Activated CD4-positive, alpha-beta memory T cell treated with anti-CD3 and anti-CD28 coated beads, Interleukin-2, amount 10 ng/mL, durations not matched to agents 7 days and 5 days (primary cell): ENCODE measurements at regions of chr3 and their contacts with region 1.

Region 1: GRCh38 chr3:64030741-64031140 is 7.4 kb upstream of the PSMD6 start:
- DNase-seq: peak; percentile 71
- H3K4me3 Mint-ChIP-seq: peak overlapping the region; percentile 63
- H3K27ac Mint-ChIP-seq: peak overlapping the region; percentile 41
- H3K4me1 Mint-ChIP-seq: peaks cover 8% of the 10 kb centered on the region
- H3K27me3 Mint-ChIP-seq: peaks cover 32% of the 10 kb centered on the region

Region 2: GRCh38 chr3:64484289-64484992 is 453.7 kb after region 1 on chr3:
- CTCF ChIA-PET with region 1: interaction called, 28 read pairs
- POLR2A ChIA-PET with region 1: no interaction called
- DNase-seq: peak; percentile 69
- H3K4me3 Mint-ChIP-seq: no peak overlapping the region
- H3K27ac Mint-ChIP-seq: no peak overlapping the region
- H3K4me1 Mint-ChIP-seq: peaks cover 6% of the 10 kb centered on the region
- H3K27me3 Mint-ChIP-seq: peaks cover 14% of the 10 kb centered on the region